Activated naive CD4-positive, alpha-beta T cell treated with anti-CD3 and anti-CD28 coated beads for 36 hours (primary cell): ENCODE measurements at regions of chr9 and their contacts with region 1.

Region 1: GRCh38 chr9:111992523-111992922 is 95.9 kb downstream of the UGCG start:
- DNase-seq: peak; percentile 61
- H3K4me3 Mint-ChIP-seq: no peak overlapping the region
- H3K27ac Mint-ChIP-seq: no peak overlapping the region
- H3K4me1 Mint-ChIP-seq: peaks cover 31% of the 10 kb centered on the region
- H3K27me3 Mint-ChIP-seq: no peaks in the 10 kb centered on the region

Region 2: GRCh38 chr9:111937781-111938426 is 54.6 kb before region 1 on chr9:
- CTCF ChIA-PET with region 1: no interaction called
- intact Hi-C with region 1: loop called (anchors 1 kb)
- DNase-seq: peak; percentile 87
- H3K4me3 Mint-ChIP-seq: peak overlapping the region; percentile 32
- H3K27ac Mint-ChIP-seq: peak overlapping the region; percentile 86
- H3K4me1 Mint-ChIP-seq: peaks cover 23% of the 10 kb centered on the region
- H3K27me3 Mint-ChIP-seq: no peaks in the 10 kb centered on the region

Region 3: DNA sequence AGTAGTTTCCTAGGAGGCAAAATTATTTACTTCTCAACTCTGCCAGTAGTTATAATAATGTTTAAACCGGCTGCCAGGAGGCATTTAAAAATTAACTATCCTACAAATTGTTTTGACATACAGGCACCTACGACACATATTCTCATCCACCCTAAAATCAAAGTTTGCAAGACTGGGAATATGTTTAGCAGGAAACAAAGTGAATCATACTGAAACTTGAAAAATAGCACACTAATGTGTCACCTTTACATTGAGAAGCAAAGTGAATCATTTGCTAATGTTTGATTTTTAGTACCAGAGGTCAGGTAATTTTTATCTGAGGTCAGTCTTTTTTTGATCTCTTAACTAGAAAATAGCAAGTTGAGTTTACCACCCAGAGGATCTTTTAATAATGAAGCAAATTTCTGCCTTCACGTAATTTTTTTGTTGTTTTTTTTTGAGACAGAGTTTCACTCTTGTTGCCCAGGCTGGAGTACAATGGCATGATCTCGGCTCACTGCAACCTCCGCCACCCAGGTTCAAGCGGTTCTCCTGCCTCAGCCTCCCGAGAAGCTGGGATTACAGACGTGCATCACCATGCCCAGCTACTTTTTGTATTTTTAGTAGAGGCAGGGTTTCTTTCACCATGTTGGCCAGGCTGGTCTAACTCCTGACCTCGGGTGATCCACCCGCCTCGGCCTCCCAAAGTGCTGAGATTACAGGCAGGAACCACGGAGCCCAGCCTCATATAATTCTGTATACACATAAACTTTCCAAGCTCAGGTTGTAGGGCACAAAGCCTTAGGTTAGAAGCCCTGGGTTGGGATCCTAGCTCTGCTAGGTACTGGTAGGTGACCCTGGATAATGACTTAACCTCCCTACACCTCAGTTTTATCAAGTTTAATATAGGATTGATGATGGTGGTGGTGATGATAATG is 28.4 kb after region 1 on chr9:
- CTCF ChIA-PET with region 1: no interaction called
- intact Hi-C with region 1: loop called (anchors 2 kb)
- DNase-seq: no peak
- H3K4me3 Mint-ChIP-seq: no peak overlapping the region
- H3K27ac Mint-ChIP-seq: no peak overlapping the region
- H3K4me1 Mint-ChIP-seq: peaks cover 9% of the 10 kb centered on the region
- H3K27me3 Mint-ChIP-seq: no peaks in the 10 kb centered on the region

Region 4: DNA sequence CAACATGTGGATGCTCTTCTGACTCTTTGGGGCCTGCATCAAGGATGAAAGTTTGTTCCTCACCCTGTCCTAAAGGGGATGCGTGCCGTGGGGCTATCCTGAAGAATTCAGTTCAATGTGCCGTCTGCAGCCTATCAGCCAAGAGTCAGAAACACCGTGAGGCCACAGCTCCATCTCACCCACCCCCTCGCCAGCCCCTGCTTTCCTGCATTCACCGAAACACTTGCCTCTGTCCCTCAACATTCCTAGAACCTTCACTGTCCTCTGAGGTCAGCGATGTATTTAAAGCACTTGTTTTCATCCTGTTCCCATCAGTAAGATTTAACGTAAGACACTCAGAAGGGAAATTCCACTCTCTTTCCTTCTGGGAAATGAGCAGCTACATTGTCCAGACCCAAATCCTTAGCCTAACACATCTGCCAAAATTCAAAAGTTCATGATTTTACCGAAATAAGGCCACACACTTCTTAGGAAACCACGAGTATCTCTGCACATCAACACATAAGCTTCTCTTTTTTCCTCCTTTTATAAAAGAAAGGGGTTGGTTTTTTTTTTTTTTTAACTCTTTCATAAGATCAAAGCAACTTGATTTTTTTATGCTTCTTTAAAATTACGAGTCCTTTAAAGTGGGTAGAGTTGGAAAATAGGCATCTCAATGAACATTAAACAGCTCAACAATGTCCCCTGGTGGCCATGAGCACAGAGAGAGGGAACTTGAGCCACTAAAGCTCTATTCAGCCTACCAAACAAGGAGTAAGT is 81.9 kb after region 1 on chr9:
- CTCF ChIA-PET with region 1: interaction called, 6 read pairs
- intact Hi-C with region 1: loop called (anchors 5 kb)
- DNase-seq: peak; percentile 85
- H3K4me3 Mint-ChIP-seq: no peak overlapping the region
- H3K27ac Mint-ChIP-seq: no peak overlapping the region
- H3K4me1 Mint-ChIP-seq: peaks cover 28% of the 10 kb centered on the region
- H3K27me3 Mint-ChIP-seq: no peaks in the 10 kb centered on the region

Region 5: DNA sequence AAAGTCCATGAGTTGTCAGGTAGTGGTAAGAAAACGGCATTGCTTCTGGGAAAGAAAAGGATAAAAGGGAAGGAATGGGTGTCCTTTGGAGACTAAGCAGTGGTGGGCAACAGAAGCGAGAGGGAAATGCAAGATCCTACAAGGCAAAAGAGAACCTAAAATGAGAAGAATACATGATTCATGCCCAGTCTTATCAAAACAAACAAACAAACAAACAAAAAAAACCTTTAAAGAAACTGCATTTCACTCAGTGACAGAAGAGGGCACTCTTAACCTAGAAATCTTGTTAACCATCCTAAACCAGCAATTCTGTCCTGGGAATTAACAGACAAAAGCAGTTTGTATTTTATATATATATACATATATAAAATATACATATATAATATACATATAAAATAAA is 94.1 kb after region 1 on chr9:
- CTCF ChIA-PET with region 1: no interaction called
- intact Hi-C with region 1: no loop called
- DNase-seq: no peak
- H3K4me3 Mint-ChIP-seq: no peak overlapping the region
- H3K27ac Mint-ChIP-seq: no peak overlapping the region
- H3K4me1 Mint-ChIP-seq: no peaks in the 10 kb centered on the region
- H3K27me3 Mint-ChIP-seq: no peaks in the 10 kb centered on the region

Region 6: GRCh38 chr9:112532427-112532826 is 539.9 kb after region 1 on chr9:
- CTCF ChIA-PET with region 1: no interaction called
- intact Hi-C with region 1: no loop called
- DNase-seq: no peak
- H3K4me3 Mint-ChIP-seq: no peak overlapping the region
- H3K27ac Mint-ChIP-seq: no peak overlapping the region
- H3K4me1 Mint-ChIP-seq: peaks cover 4% of the 10 kb centered on the region
- H3K27me3 Mint-ChIP-seq: no peaks in the 10 kb centered on the region